ENCODE measurements at regions of chr3 and their contacts with region 1.

Region 1: GRCh38 chr3:119322835-119323722 is 28.9 kb downstream of the ARHGAP31 start:
- DNase-seq: peak; percentile 67 to 94 (median 84)
- ATAC-seq: peak; percentile 83 to 93 (median 92)
- H3K4me3 ChIP-seq: peak overlapping the region; percentile 76 to 84
- H3K4me3 Mint-ChIP-seq: peak overlapping the region; percentile 79 to 84 (median 80)
- H3K27ac ChIP-seq: peak overlapping the region; percentile 92
- H3K27ac Mint-ChIP-seq: peak overlapping the region; percentile 88 to 91
- H3K4me1 ChIP-seq: peaks cover 9 to 19% of the 10 kb centered on the region in 2 experiments
- H3K4me1 Mint-ChIP-seq: peaks cover 17 to 20% (median 18%) of the 10 kb centered on the region in 3 donors
- H3K27me3 ChIP-seq: no peaks in the 10 kb centered on the region
- H3K27me3 Mint-ChIP-seq: no peaks in the 10 kb centered on the region

Region 2: DNA sequence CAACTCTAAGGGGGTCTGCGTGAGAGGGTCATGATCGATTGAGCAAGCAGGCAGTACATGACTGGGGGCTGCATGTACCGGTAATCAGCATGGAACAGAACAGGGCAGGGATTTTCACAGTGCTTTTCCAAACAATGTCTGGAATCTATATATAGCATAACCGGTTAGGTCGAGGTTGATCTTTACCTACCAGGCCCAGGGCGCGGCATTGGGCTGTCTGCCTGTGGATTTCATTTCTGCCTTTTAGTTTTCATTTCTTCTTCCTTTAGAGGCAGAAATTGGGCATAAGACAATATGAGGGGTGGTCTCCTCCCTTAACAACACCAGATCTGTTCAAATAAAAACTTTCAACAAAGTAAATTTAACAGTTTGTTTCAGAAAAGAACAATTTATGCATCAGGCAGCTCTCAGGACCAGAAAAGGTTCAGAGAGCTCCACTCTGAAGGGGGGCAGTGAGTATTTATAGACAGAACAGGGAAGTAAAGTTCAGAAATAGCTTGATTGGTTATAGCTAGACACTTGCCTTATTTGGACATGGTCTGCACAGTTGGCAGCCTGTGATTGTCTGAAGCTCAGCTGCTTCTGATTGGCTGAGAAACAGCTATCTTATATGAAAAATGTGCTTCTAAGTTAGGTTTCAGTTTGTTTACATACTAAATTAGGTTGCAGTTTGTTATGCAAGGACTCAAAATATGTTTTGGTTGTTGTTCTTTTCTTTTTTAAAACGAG is 65.2 kb before region 1 on chr3:
- CTCF ChIA-PET with region 1: interaction called in 1 of 2 experiments, 11 read pairs
- POLR2A ChIA-PET with region 1: no interaction called
- DNase-seq: no peak
- ATAC-seq: no peak
- H3K4me3 ChIP-seq: no peak overlapping the region
- H3K4me3 Mint-ChIP-seq: no peak overlapping the region
- H3K27ac ChIP-seq: no peak overlapping the region
- H3K27ac Mint-ChIP-seq: no peak overlapping the region
- H3K4me1 ChIP-seq: peaks cover 0 to 4% of the 10 kb centered on the region in 2 experiments
- H3K4me1 Mint-ChIP-seq: peaks cover 0 to 7% (median 6%) of the 10 kb centered on the region in 3 donors
- H3K27me3 ChIP-seq: no peaks in the 10 kb centered on the region
- H3K27me3 Mint-ChIP-seq: no peaks in the 10 kb centered on the region

Region 3: GRCh38 chr3:119293871-119294695 is 29.0 kb before region 1 on chr3 and contains the start of gene ARHGAP31:
- CTCF ChIA-PET with region 1: interaction called, 5 to 7 read pairs
- POLR2A ChIA-PET with region 1: interaction called in 1 of 2 experiments, 14 read pairs
- DNase-seq: peak; percentile 60 to 94 (median 85)
- ATAC-seq: peak; percentile 67 to 76 (median 72)
- H3K4me3 ChIP-seq: peak within 1 kb of the TSS; percentile 74 to 81
- H3K4me3 Mint-ChIP-seq: peak within 1 kb of the TSS; percentile 85 to 93 (median 90)
- H3K27ac ChIP-seq: peak within 1 kb of the TSS; percentile 97
- H3K27ac Mint-ChIP-seq: peak within 1 kb of the TSS; percentile 79 to 94
- H3K4me1 ChIP-seq: peaks cover 15 to 53% of the 10 kb centered on the region in 2 experiments
- H3K4me1 Mint-ChIP-seq: peaks cover 53 to 67% (median 65%) of the 10 kb centered on the region in 3 donors
- H3K27me3 ChIP-seq: peaks cover 0 to 8% of the 10 kb centered on the region in 2 experiments
- H3K27me3 Mint-ChIP-seq: no peaks in the 10 kb centered on the region
- total RNA-seq, gene ARHGAP31: 2.7 to 5.1 (median 3.4) TPM

Region 4: DNA sequence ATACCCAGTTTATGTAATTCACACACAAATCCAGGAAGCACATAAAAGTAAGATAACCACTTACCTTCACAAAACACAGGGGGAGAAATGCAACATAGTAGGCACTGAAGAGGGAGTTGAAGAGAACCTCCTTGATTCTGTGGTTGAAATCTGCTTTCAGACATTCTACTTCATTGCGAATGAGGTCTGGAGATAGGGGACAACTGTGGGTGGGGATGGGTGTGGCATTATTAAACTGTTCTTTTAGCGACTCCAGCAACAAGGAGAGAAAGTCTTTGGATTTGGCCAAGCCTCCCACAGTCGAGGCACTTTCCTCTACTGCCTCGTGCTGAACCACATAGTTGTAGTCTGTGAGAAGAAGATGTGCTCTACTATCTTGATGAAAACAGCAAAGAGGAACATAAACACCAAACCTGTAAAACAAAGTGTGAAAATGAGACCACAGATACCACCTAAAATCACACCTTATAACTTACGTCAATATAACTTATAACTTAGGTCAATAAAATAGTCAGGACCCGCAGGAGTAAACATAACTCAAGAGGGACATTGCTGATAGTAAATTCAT is 114.7 kb after region 1 on chr3:
- CTCF ChIA-PET with region 1: no interaction called
- POLR2A ChIA-PET with region 1: interaction called in 1 of 2 experiments, 10 read pairs
- DNase-seq: peak in 1 of 35 experiments; percentile 24
- ATAC-seq: peak in 1 of 4 experiments; percentile 26
- H3K4me3 ChIP-seq: no peak overlapping the region
- H3K4me3 Mint-ChIP-seq: no peak overlapping the region
- H3K27ac ChIP-seq: no peak overlapping the region
- H3K27ac Mint-ChIP-seq: no peak overlapping the region
- H3K4me1 ChIP-seq: peaks cover 0 to 4% of the 10 kb centered on the region in 2 experiments
- H3K4me1 Mint-ChIP-seq: peaks cover 0 to 2% (median 0%) of the 10 kb centered on the region in 3 donors
- H3K27me3 ChIP-seq: no peaks in the 10 kb centered on the region
- H3K27me3 Mint-ChIP-seq: no peaks in the 10 kb centered on the region

Region 5: GRCh38 chr3:120039642-120040610 is 716.8 kb after region 1 on chr3:
- CTCF ChIA-PET with region 1: no interaction called
- POLR2A ChIA-PET with region 1: interaction called in 1 of 2 experiments, 10 read pairs
- DNase-seq: peak in 1 of 35 experiments; percentile 26
- ATAC-seq: no peak
- H3K4me3 ChIP-seq: no peak overlapping the region
- H3K4me3 Mint-ChIP-seq: no peak overlapping the region
- H3K27ac ChIP-seq: no peak overlapping the region
- H3K27ac Mint-ChIP-seq: no peak overlapping the region
- H3K4me1 ChIP-seq: no peaks in the 10 kb centered on the region
- H3K4me1 Mint-ChIP-seq: peaks cover 36 to 38% (median 36%) of the 10 kb centered on the region in 3 donors
- H3K27me3 ChIP-seq: no peaks in the 10 kb centered on the region
- H3K27me3 Mint-ChIP-seq: no peaks in the 10 kb centered on the region